CD8-positive, alpha-beta T cell (primary cell): ENCODE measurements at regions of chr7 and their contacts with region 1.

Region 1: DNA sequence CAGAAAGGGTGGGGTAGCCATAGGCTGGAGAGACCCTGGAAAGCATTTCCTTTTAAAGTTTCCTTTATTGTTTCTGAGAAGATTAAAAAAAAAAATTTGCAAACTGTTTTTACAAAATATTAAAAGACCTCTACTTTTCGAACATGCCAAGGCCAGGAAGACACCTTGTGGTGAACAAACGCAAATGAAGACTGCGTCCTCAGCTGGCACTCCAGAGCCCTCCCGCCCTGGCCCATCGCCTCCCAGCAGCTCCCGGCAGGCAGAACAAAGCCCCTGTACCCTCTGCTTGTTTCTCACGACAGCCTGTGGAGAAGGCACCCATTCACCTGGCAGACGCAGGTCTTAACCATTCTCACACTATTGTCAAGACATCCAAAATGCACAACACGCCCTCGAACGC is 56.4 kb downstream of the ESYT2 start:
- DNase-seq: no peak
- ATAC-seq: no peak
- H3K4me3 ChIP-seq: no peak overlapping the region
- H3K4me3 Mint-ChIP-seq: no peak overlapping the region
- H3K27ac ChIP-seq: no peak overlapping the region
- H3K27ac Mint-ChIP-seq: no peak overlapping the region
- H3K4me1 ChIP-seq: peaks cover 18% of the 10 kb centered on the region
- H3K4me1 Mint-ChIP-seq: peaks cover 30% of the 10 kb centered on the region
- H3K27me3 ChIP-seq: no peaks in the 10 kb centered on the region
- H3K27me3 Mint-ChIP-seq: no peaks in the 10 kb centered on the region
- CTCF ChIP-seq: no peak

Region 2: GRCh38 chr7:158789842-158790241 is 16.9 kb after region 1 on chr7:
- CTCF ChIA-PET with region 1: interaction called, 3 read pairs
- POLR2A ChIA-PET with region 1: no interaction called
- intact Hi-C with region 1: loop called in 1 of 2 experiments (anchors 2 kb)
- DNase-seq: no peak
- ATAC-seq: no peak
- H3K4me3 ChIP-seq: no peak overlapping the region
- H3K4me3 Mint-ChIP-seq: no peak overlapping the region
- H3K27ac ChIP-seq: no peak overlapping the region
- H3K27ac Mint-ChIP-seq: no peak overlapping the region
- H3K4me1 ChIP-seq: no peaks in the 10 kb centered on the region
- H3K4me1 Mint-ChIP-seq: peaks cover 2% of the 10 kb centered on the region
- H3K27me3 ChIP-seq: no peaks in the 10 kb centered on the region
- H3K27me3 Mint-ChIP-seq: no peaks in the 10 kb centered on the region
- CTCF ChIP-seq: no peak